ENCODE measurements at regions of chr5 and their contacts with region 1.

Region 1: DNA sequence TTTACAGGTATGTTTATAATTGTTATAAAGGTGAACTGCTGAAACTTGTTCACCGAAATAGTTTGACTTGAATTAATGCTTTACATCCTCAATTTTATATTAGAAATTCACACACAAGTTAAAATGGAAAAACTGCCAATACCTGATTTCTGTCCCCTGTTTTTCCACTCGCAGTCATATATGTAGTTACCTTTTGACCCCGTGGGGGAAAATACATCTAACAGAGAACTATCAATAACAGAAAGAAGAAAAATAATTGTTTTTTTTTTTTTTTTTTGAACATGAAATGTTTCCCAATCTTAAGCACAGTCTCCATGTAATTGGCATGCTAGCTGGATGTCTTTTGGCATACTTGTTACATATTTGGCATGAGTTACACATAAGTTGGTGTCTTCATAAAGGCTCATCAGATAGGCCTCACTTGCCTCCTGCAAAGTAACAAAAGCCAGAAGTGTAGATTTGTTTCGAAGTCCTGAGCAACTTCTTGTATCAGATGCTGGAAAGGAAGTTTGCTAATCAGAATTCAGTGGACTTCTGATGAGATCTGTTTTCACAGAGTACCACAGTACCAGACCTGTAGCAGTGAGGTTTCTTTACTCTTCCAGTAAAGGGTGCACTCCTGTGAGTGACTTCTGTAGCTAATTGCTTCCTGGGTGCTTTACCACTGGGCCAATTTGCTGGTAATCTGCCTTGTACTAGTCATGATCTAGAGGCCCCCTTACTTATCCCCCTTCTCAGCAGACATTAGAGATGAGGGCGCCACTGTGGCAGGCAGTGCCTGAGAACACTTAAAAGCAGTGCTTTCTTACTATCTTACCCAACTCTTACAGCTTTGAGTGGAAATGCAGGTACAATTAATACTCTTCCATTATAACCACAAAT is 36.2 kb upstream of the CXXC5 start:
- DNase-seq: no peak
- ATAC-seq: peak; percentile 29
- H3K4me3 ChIP-seq: no peak overlapping the region
- H3K4me3 Mint-ChIP-seq: no peak overlapping the region
- H3K27ac ChIP-seq: no peak overlapping the region
- H3K27ac Mint-ChIP-seq: peak overlapping the region; percentile 73
- H3K4me1 ChIP-seq: peaks cover under 1% of the 10 kb centered on the region
- H3K4me1 Mint-ChIP-seq: peaks cover 39% of the 10 kb centered on the region
- H3K27me3 ChIP-seq: no peaks in the 10 kb centered on the region
- H3K27me3 Mint-ChIP-seq: no peaks in the 10 kb centered on the region
- CTCF ChIP-seq: no peak

Region 2: DNA sequence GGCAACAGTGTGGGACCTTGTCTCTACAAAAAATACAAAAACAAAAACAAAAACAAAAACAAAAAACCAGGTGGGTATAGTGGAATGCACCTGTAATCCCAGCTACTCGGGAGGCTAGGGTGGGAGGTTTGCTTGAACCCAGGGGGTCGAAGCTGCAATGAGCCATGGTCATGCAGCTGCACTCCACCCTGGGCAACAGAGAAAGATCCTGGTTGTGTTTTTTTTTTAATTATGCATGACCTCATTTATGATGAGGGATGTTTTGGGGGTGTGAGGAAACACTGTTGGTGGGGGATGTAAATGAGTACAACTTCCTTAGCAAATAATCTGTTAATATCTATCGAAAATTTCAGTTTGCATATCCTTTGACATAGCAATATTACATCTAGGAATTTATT is 80.2 kb before region 1 on chr5:
- CTCF ChIA-PET with region 1: no interaction called
- POLR2A ChIA-PET with region 1: no interaction called
- intact Hi-C with region 1: no loop called
- DNase-seq: no peak
- ATAC-seq: no peak
- H3K4me3 ChIP-seq: no peak overlapping the region
- H3K4me3 Mint-ChIP-seq: no peak overlapping the region
- H3K27ac ChIP-seq: no peak overlapping the region
- H3K27ac Mint-ChIP-seq: no peak overlapping the region
- H3K4me1 ChIP-seq: no peaks in the 10 kb centered on the region
- H3K4me1 Mint-ChIP-seq: no peaks in the 10 kb centered on the region
- H3K27me3 ChIP-seq: no peaks in the 10 kb centered on the region
- H3K27me3 Mint-ChIP-seq: no peaks in the 10 kb centered on the region
- CTCF ChIP-seq: no peak

Region 3: GRCh38 chr5:139574641-139575312 is 37.2 kb before region 1 on chr5:
- CTCF ChIA-PET with region 1: interaction called, 4 read pairs
- POLR2A ChIA-PET with region 1: interaction called, 6 read pairs
- intact Hi-C with region 1: loop called (anchors 5 to 10 kb)
- DNase-seq: peak in 4 of 14 experiments; percentile 28 to 73 (median 66)
- ATAC-seq: peak; percentile 37
- H3K4me3 ChIP-seq: no peak overlapping the region
- H3K4me3 Mint-ChIP-seq: peak overlapping the region; percentile 53
- H3K27ac ChIP-seq: no peak overlapping the region
- H3K27ac Mint-ChIP-seq: peak overlapping the region; percentile 92
- H3K4me1 ChIP-seq: peaks cover 62% of the 10 kb centered on the region
- H3K4me1 Mint-ChIP-seq: peaks cover 77% of the 10 kb centered on the region
- H3K27me3 ChIP-seq: no peaks in the 10 kb centered on the region
- H3K27me3 Mint-ChIP-seq: no peaks in the 10 kb centered on the region
- CTCF ChIP-seq: peak; percentile 79